GM10248 (cell line): ENCODE measurements at regions of chr10 and their contacts with region 1.

Region 1: GRCh38 chr10:77004917-77005564 is 632.6 kb downstream of the KCNMA1 start:
- DNase-seq: peak; percentile 23
- CTCF ChIP-seq: peak; percentile 59

Region 2: DNA sequence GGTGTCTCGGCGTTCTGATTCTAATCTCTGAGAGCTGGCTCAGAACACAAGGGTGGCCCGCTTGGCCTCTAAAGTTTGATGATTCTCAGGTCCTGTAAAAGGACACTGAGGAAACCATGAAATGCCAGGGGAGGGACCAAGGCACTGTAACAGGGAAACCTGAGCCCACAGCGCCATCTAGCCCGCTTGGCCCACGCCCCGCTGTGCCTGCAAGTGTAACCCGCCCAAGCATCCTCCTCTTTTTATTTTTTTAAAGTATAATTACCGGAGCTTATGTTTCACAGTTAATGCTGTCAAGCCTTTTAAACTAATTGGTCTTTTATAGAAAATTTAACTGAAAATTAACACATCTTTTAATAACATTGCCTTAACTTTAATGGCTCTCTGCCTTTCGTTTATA is 102.1 kb before region 1 on chr10:
- CTCF ChIA-PET with region 1: no interaction called
- POLR2A ChIA-PET with region 1: no interaction called
- DNase-seq: no peak
- CTCF ChIP-seq: no peak

Region 3: GRCh38 chr10:76922666-76923065 is 82.4 kb before region 1 on chr10:
- CTCF ChIA-PET with region 1: no interaction called
- POLR2A ChIA-PET with region 1: no interaction called
- DNase-seq: no peak
- CTCF ChIP-seq: no peak

Region 4: DNA sequence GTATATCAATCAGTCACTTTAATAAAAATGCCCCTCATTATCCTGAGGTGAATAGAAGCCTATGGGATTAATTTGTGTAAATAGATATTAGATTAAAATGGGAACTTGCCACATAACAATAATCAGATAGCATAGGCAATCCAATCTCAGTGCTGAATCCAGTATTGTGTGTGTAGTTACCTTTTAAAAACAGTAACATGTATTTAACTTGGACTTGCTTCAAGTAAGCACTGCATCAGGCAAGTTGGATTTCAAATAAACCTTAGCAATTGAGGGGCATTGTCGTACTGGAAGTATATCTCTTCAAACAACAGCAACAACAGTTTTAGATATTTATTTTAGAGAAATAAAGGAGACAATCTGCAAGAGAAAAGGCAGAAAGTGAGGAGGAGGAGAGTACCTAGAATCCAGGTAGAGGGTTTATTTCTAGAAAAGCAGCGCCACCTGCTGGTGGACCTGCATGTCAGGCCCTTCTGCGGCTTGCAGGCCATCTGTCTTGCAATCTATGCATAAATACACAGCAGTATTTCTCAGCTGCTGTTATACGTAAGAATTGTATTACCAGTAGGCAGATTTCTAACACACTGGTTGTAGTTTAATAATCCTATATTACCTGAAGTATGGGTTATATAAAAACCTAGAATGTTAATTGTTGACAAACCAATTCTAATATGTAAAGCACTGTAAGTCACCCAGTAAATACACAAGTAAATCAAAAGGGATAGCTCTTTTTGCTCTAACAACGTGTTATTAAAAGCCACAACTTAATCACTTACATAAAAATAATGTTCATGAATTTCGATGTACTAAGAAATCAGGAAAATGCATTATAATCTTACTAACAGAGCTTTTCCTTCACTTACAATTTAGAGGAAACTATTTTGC is 20.2 kb before region 1 on chr10:
- CTCF ChIA-PET with region 1: interaction called, 31 read pairs
- POLR2A ChIA-PET with region 1: no interaction called
- DNase-seq: peak; percentile 41
- CTCF ChIP-seq: peak; percentile 94

Region 5: DNA sequence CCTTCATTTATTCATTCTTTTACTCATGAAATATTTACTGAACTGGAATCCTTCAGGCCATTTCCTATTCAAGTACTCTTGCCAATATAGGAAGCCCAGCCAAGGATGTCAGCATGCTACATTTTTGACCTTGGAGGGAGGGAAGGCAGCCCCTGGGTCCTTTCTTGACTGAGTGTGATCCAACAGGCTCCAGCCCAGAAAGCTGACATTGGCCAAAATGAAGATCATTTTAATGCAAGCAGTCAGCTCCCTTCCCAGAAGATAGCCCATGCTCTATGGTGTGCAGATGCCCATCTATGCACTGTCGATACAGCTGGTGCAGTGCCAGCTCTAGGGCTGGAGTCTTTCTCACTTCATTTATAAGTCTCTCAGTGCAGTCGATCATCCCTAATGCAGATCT is 13.4 kb before region 1 on chr10:
- CTCF ChIA-PET with region 1: interaction called, 34 read pairs
- POLR2A ChIA-PET with region 1: no interaction called
- DNase-seq: no peak
- CTCF ChIP-seq: no peak

Region 6: DNA sequence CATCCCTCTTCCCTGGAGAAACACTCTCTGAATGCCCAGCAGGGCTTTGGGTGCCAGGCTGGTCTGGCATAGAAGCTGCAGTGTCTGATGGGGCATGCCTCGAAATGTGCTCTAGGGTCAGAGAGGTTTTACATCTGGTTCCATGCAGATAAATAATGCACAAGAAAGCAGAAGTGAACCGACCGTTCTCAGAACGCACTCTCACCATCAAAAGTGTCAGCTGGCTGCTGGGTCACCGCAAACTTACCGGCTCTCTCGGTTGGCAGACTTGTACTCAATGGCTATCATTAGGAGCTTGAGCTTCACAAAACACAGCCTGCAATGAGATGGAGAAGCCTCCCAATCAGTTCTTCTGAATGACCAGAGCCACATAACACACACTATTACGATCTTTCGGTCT is 22.5 kb after region 1 on chr10:
- CTCF ChIA-PET with region 1: interaction called, 17 read pairs
- POLR2A ChIA-PET with region 1: no interaction called
- DNase-seq: peak; percentile 9
- CTCF ChIP-seq: no peak

Region 7: DNA sequence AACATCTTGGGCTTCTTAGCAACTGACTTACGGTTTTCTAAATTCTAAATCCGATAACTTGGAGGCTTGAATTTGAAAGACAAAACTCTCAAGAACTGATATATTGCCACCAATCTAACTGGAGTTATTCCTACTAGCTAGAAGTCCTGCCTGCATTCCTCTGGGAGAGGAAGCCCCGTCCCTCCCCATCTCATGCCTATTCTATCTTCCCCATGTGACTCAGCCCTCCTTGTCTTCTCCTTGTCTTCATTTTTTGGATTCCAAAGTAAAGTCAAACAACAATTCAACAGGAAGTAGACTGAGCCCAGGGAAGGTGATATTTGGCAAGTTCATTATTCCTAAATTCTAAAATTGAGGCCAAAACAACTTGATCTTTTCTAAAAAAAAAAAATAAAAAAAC is 44.9 kb after region 1 on chr10:
- CTCF ChIA-PET with region 1: no interaction called
- POLR2A ChIA-PET with region 1: no interaction called
- DNase-seq: no peak
- CTCF ChIP-seq: no peak

Region 8: DNA sequence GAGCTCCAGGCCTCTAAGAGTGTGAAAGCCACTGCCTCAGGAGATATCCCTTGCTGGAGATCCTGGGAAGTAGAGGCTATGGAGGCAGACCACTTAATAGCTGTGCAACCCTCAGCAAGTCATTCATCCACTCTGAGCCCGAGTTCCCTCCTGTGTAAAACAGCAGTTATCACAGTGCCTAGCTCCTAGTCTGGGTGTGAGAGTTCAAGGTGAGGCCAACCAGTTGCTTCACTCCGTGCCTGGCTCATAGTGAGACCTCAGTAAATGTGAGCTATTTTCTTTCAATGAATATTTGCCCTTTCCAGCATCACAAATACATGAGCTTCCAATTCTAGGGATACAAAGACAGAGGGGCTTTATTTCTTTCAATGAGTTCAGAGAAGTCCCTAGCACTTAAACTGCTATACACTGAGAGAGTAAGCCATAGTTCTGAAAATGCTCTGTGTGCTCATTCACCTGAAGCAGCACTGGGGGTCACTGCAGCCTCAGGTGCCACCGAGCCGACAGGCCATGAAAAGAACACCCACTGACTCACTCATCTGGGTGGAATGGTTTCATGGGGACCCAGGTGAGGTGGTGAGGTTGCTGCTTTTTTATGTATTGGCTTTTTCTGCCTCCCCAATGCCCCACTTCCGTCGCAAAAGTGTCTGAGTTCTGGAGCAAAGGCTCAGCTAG is 372.8 kb after region 1 on chr10:
- CTCF ChIA-PET with region 1: no interaction called
- POLR2A ChIA-PET with region 1: no interaction called
- DNase-seq: no peak
- CTCF ChIP-seq: no peak